MCF 10A (cell line): ENCODE measurements at regions of chr7 and their contacts with region 1.

Region 1: GRCh38 chr7:130486114-130486958 is 5.5 kb upstream of the MEST start:
- DNase-seq: peak; percentile 89
- H3K4me3 Mint-ChIP-seq: peak overlapping the region; percentile 93
- H3K27ac Mint-ChIP-seq: peak overlapping the region; percentile 91
- H3K4me1 Mint-ChIP-seq: peaks cover 33% of the 10 kb centered on the region
- H3K27me3 Mint-ChIP-seq: no peaks in the 10 kb centered on the region
- CTCF ChIP-seq: peak; percentile 83

Region 2: DNA sequence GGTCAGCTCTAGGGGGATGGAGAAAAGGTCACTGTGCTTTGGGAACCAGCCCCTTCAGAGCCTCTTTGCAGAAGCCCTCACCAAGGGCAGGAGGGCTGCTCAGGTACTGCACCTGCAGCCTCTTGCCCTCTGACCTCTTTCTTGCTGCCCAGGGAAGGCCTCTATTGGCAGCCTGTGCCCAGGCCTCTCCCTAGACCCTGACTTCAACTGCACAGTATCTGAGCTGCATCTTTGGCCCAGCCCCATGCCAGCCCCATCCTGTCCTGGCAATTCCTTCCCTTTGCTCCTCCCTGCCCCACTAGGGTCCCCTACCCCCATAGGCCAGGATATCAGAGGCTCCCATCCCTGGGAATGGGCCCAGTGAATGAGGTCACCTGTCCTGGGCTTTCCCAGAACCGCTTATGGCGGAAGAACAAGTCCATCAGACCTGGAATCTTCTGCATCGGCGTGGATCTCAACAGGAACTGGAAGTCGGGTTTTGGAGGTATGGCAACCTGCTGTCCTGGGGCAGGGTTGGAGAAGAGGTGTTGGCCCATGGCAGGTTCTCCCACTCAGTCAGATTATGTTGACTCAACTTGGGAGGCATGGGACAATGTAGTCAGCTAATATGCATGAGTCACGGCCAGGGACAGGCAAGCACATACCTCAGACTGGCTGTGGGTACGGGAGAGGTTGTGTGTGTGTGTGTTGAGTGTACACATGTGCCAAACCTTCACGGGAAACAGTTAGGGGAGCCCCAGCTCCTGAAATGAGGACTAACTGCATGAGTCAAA is 123.1 kb before region 1 on chr7:
- CTCF ChIA-PET with region 1: no interaction called
- POLR2A ChIA-PET with region 1: no interaction called
- intact Hi-C with region 1: loop called (anchors 2 kb)
- DNase-seq: peak; percentile 97
- H3K4me3 Mint-ChIP-seq: peak overlapping the region; percentile 43
- H3K27ac Mint-ChIP-seq: peak overlapping the region; percentile 83
- H3K4me1 Mint-ChIP-seq: peaks cover 31% of the 10 kb centered on the region
- H3K27me3 Mint-ChIP-seq: no peaks in the 10 kb centered on the region
- CTCF ChIP-seq: no peak

Region 3: DNA sequence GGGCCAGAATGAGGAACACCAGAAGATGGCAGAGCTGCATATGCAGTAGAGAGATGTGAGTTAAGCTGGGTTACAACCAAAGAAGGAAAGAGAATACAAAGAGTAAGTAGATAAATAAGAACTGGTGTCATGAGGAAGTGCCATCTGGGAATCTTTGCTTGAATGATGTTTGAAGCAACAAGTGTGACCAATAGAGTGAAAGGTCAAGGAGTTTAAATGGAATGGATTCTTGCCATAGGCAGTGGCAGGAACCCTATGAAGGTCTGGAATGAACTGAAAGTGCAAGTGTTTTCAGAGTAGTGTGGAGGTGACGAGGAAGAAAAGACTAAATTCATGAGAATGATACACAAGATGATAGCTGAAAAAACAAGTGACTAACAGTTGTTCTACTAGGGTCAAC is 27.1 kb after region 1 on chr7:
- CTCF ChIA-PET with region 1: no interaction called
- POLR2A ChIA-PET with region 1: no interaction called
- intact Hi-C with region 1: no loop called
- DNase-seq: no peak
- H3K4me3 Mint-ChIP-seq: no peak overlapping the region
- H3K27ac Mint-ChIP-seq: no peak overlapping the region
- H3K4me1 Mint-ChIP-seq: no peaks in the 10 kb centered on the region
- H3K27me3 Mint-ChIP-seq: no peaks in the 10 kb centered on the region
- CTCF ChIP-seq: no peak

Region 4: DNA sequence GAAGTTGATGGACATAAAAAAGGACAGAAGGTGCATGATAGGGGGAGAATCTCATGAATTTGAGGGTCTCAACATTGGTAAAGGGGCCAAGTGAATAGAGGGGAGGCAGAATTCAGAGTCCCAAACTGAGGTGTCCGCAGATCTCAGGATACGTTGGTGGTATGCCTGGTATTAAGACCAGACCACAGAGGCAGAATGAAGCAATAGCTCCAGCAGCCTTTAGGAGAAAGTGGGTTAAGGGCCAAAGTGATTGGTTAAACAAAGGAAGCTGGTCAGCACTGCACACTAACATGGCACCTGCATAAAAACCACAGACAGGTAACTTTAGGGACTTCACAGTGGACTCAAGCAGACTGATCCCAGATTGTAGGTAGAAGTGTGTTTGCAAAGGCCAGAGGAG is 43.1 kb after region 1 on chr7:
- CTCF ChIA-PET with region 1: no interaction called
- POLR2A ChIA-PET with region 1: no interaction called
- intact Hi-C with region 1: no loop called
- DNase-seq: no peak
- H3K4me3 Mint-ChIP-seq: no peak overlapping the region
- H3K27ac Mint-ChIP-seq: no peak overlapping the region
- H3K4me1 Mint-ChIP-seq: no peaks in the 10 kb centered on the region
- H3K27me3 Mint-ChIP-seq: no peaks in the 10 kb centered on the region
- CTCF ChIP-seq: no peak

Region 5: DNA sequence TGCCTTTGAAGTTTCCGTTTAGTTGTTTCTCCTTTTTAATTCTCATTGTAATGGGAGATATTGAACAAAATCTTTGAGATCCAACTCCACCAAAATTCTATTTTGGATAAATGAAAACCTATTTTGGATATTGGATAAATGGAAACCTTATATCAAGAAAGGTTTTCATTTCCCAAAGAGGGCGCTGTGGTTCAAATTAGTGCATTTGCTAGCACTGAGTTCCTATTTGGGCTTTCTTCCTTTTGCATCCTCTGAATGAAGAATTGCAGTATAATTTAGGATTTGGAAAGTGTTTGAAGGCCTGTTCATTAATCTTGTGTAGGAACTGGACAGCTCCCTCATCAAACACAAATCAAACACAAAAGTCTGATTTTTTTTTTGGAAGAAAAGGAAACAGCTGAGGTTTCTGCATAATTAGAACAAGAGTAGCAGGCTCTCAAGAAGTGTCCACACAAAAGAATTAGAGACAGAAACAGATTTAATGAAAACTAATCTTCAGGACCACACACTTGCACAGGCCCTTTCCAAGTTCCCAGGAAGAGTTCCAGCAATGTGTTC is 328.5 kb after region 1 on chr7:
- CTCF ChIA-PET with region 1: no interaction called
- POLR2A ChIA-PET with region 1: no interaction called
- intact Hi-C with region 1: no loop called
- DNase-seq: peak; percentile 61
- H3K4me3 Mint-ChIP-seq: no peak overlapping the region
- H3K27ac Mint-ChIP-seq: no peak overlapping the region
- H3K4me1 Mint-ChIP-seq: no peaks in the 10 kb centered on the region
- H3K27me3 Mint-ChIP-seq: no peaks in the 10 kb centered on the region
- CTCF ChIP-seq: peak; percentile 46

Region 6: DNA sequence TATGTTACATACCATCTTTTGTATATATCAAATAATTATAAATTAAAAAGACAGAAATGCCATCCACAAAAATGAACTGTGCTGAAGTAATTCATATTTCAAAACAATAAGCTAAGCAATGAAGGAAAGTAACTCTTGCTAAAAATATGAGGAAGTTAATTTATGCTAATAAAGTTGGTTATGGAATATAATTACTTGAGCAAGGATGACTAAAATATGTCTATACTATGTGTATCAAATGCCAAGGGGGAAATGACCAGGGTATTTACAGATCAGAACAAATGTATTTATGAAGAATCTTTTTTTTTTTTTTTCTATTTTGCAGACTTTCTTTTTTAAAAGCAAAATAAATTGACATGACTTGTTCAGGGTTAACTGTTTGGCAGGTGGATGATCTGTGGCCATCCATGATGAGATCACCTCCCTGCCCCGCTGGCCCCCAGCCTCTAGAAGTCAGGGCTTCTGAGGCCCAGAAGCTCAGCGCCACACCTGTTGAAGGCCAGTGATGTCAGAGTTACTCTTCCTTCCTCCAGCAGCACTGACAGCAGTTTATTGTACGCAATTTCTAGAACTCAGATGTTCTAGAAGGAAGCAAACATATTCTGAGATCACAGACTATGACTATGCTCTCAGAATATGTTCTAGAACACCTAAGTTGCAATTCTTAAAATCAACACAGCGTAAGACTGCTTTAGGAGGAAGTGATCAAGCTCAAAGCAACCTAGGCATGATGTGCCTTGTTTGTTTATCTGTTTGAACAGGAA is 443.7 kb after region 1 on chr7:
- CTCF ChIA-PET with region 1: no interaction called
- POLR2A ChIA-PET with region 1: no interaction called
- intact Hi-C with region 1: no loop called
- DNase-seq: no peak
- H3K4me3 Mint-ChIP-seq: no peak overlapping the region
- H3K27ac Mint-ChIP-seq: peak overlapping the region; percentile 79
- H3K4me1 Mint-ChIP-seq: peaks cover 33% of the 10 kb centered on the region
- H3K27me3 Mint-ChIP-seq: no peaks in the 10 kb centered on the region
- CTCF ChIP-seq: no peak